ENCODE measurements at regions of chr19 and their contacts with region 1.

Region 1: GRCh38 chr19:48780631-48781391 is 25.5 kb downstream of the FGF21 start:
- DNase-seq: no peak
- ATAC-seq: peak in 1 of 2 donors; percentile 23

Region 2: DNA sequence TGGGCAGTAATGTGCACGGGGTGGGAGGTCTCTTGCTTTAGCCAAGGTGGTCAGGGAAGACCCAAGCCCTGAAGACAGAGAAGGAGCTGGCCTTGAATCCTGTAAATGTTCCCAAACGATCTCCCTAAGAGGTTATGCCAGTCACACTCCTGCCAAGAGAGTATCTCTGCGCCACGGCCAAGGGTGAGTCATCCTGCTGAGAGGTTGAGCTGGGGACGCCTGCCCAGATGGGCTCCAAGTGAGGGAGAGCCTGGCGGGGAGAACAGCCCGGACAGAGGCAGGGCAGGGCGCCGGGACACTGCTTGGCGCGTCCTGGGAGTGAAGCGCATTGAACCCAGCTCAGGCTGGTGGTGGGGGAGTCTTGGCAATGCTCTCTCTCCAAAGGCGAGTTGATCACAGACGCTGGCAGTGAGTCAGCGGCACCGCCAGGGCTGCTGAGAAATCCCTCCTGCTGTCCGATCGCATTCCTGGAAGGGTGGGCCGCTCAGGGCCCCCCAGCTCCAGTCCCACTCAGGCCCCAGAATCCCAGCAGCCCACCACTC is 212.4 kb before region 1 on chr19:
- intact Hi-C with region 1: no loop called
- DNase-seq: peak; percentile 91
- ATAC-seq: peak; percentile 98 to 99

Region 3: DNA sequence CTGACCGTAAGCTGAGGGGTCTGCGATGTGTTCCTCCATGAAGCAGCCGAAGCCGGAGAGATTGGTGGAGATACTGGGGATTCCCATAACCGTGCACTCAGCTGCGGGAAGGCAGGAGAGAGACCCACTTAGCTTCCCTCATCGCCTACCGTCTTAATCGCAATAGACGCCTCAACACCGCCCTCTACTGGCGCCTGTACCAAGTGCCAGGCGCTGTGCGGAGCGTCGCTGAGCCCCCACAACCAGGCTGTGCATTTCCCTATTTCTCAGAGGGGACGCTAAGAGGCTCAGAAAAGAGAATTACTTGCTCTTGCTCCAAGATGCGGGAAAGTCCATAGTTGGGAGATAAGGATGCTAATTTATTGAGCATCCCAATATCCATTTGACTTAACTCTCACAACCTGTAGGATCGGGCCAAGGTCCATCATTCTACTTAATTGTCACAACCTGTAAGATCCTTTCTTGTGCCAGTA is 190.1 kb after region 1 on chr19:
- intact Hi-C with region 1: loop called in 1 of 2 experiments (anchors 5 kb)
- DNase-seq: peak; percentile 88
- ATAC-seq: peak; percentile 53 to 56

Measured in left cardiac atrium (tissue), 4 donors.